ENCODE measurements at regions of chr14 and their contacts with region 1.

Region 1: DNA sequence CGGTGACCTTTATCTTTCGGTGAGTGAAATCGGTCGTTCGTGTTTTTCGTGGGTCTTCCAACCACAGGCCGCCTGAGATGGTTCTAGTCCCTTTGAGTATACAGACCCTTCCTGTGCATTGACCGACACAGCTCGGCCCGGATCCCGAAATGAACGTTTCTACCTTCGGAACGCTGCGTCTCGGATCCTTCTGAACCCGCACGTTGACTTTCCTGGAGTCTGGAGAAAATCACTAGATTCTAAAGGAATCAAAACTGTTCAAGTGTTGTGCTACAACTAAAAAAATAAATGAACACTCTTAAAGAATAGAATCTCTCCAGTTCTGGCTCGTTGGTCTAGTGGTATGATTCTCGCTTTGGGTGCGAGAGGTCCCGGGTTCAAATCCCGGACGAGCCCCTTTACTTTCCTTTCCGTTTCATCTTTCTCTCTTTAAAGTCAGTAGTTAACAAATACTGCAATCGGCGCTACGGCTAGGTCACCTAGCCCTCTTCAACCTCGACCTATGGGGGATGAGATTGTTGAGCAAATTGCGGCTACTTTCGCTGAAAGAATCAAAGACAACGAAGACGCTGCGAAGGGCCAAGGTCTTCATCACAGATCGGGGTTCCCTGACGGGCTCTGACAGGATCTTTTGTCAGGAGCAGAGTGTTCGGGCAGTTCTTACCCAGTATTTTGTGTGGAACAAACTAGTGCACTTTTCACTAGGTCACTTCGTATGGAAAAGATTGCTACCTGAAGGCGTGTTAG is 8.6 kb downstream of the OR6S1 start:
- DNase-seq: peak in 8 of 10 donors; percentile 44 to 80 (median 62)
- ATAC-seq: peak; percentile 60 to 70
- H3K4me3 Mint-ChIP-seq: peak overlapping the region; percentile 79 to 93 (median 87)
- H3K27ac Mint-ChIP-seq: peak overlapping the region; percentile 25 to 98 (median 77)
- H3K4me1 Mint-ChIP-seq: peaks cover 27 to 55% (median 51%) of the 10 kb centered on the region in 4 donors
- H3K27me3 Mint-ChIP-seq: peaks cover 0 to 48% (median 3%) of the 10 kb centered on the region in 5 donors

Region 2: GRCh38 chr14:20603813-20604690 is 28.8 kb before region 1 on chr14:
- POLR2A ChIA-PET with region 1: no interaction called
- DNase-seq: no peak
- ATAC-seq: no peak
- H3K4me3 Mint-ChIP-seq: no peak overlapping the region
- H3K27ac Mint-ChIP-seq: no peak overlapping the region
- H3K4me1 Mint-ChIP-seq: no peaks in the 10 kb centered on the region
- H3K27me3 Mint-ChIP-seq: no peaks in the 10 kb centered on the region

Region 3: GRCh38 chr14:20652996-20653975 is 20.4 kb after region 1 on chr14:
- POLR2A ChIA-PET with region 1: no interaction called
- DNase-seq: peak in 4 of 10 donors; percentile 18 to 52 (median 33)
- ATAC-seq: peak; percentile 53 to 79
- H3K4me3 Mint-ChIP-seq: peak overlapping the region; percentile 36 to 72 (median 63)
- H3K27ac Mint-ChIP-seq: peak overlapping the region in 1 of 10 donors; percentile 0
- H3K4me1 Mint-ChIP-seq: peaks cover 20 to 37% (median 24%) of the 10 kb centered on the region in 4 donors
- H3K27me3 Mint-ChIP-seq: peaks cover 52 to 84% (median 57%) of the 10 kb centered on the region in 5 donors

Region 4: GRCh38 chr14:20682435-20683124 is 49.7 kb after region 1 on chr14:
- POLR2A ChIA-PET with region 1: interaction called, 36 read pairs
- DNase-seq: peak; percentile 71 to 91 (median 80)
- ATAC-seq: peak; percentile 61 to 70
- H3K4me3 Mint-ChIP-seq: no peak overlapping the region
- H3K27ac Mint-ChIP-seq: no peak overlapping the region
- H3K4me1 Mint-ChIP-seq: peaks cover 8 to 33% (median 15%) of the 10 kb centered on the region in 4 donors
- H3K27me3 Mint-ChIP-seq: peaks cover 0 to 5% (median 0%) of the 10 kb centered on the region in 5 donors

Region 5: GRCh38 chr14:20707622-20708021 is 74.8 kb after region 1 on chr14:
- POLR2A ChIA-PET with region 1: no interaction called
- DNase-seq: no peak
- ATAC-seq: no peak
- H3K4me3 Mint-ChIP-seq: no peak overlapping the region
- H3K27ac Mint-ChIP-seq: no peak overlapping the region
- H3K4me1 Mint-ChIP-seq: no peaks in the 10 kb centered on the region
- H3K27me3 Mint-ChIP-seq: peaks cover 0 to 5% (median 0%) of the 10 kb centered on the region in 5 donors

Measured in naive thymus-derived CD8-positive, alpha-beta T cell (primary cell).